ENCODE measurements at regions of chr15 and their contacts with region 1.

Region 1: GRCh38 chr15:98779463-98780071 is 131.2 kb downstream of the IGF1R start:
- DNase-seq: peak; percentile 85 to 90
- H3K4me3 ChIP-seq: no peak overlapping the region
- H3K27ac ChIP-seq: peak overlapping the region; percentile 11 to 75 (median 28)
- H3K4me1 ChIP-seq: peaks cover 28 to 67% (median 44%) of the 10 kb centered on the region in 4 donors
- H3K27me3 ChIP-seq: no peaks in the 10 kb centered on the region
- CTCF ChIP-seq: peak in 5 of 7 experiments; percentile 85 to 90 (median 87)
- EP300 ChIP-seq: no peak
- POLR2A ChIP-seq: no peak

Region 2: DNA sequence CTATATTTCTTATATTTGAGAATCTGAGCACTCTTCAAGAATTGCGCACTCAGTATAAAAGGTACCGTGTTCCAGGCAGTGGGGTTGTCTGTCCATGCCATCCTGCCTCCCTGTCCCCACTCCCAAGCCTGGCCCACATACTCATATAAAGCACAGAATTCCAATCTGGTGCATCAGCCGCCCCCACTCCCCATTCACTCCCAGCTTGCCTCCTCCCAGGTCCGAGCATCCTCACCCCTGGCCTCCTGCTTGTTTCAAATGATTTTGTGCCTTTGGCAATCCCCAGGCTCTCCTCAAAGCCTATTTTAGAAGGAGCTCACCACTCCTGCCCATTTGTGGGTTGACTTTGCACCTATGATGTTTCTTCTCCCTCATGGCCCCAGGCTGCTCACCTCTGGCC is 153.4 kb before region 1 on chr15:
- intact Hi-C with region 1: no loop called
- DNase-seq: no peak
- H3K4me3 ChIP-seq: no peak overlapping the region
- H3K27ac ChIP-seq: no peak overlapping the region
- H3K4me1 ChIP-seq: no peaks in the 10 kb centered on the region
- H3K27me3 ChIP-seq: peaks cover 0 to 49% (median 23%) of the 10 kb centered on the region in 3 donors
- CTCF ChIP-seq: no peak
- EP300 ChIP-seq: no peak
- POLR2A ChIP-seq: no peak

Region 3: GRCh38 chr15:98658831-98659699 is 120.5 kb before region 1 on chr15:
- intact Hi-C with region 1: loop called (anchors 10 kb)
- DNase-seq: peak in 1 of 2 donors; percentile 78
- H3K4me3 ChIP-seq: no peak overlapping the region
- H3K27ac ChIP-seq: peak overlapping the region in 1 of 5 donors; percentile 42
- H3K4me1 ChIP-seq: peaks cover 0 to 80% (median 56%) of the 10 kb centered on the region in 4 donors
- H3K27me3 ChIP-seq: no peaks in the 10 kb centered on the region
- CTCF ChIP-seq: peak in 5 of 7 experiments; percentile 48 to 79 (median 75)
- EP300 ChIP-seq: no peak
- POLR2A ChIP-seq: no peak

Measured in stomach (tissue), 19 donors.